ENCODE measurements at regions of chr6 and their contacts with region 1.

Region 1: GRCh38 chr6:151702851-151703611 is 104.5 kb upstream of the ESR1 start:
- DNase-seq: no peak
- ATAC-seq: peak; percentile 49
- H3K4me3 Mint-ChIP-seq: peak overlapping the region; percentile 60
- H3K27ac Mint-ChIP-seq: peak overlapping the region; percentile 82
- H3K4me1 Mint-ChIP-seq: peaks cover 46% of the 10 kb centered on the region
- H3K27me3 Mint-ChIP-seq: no peaks in the 10 kb centered on the region
- CTCF ChIP-seq: no peak

Region 2: GRCh38 chr6:151723152-151723551 is 20.1 kb after region 1 on chr6:
- CTCF ChIA-PET with region 1: no interaction called
- POLR2A ChIA-PET with region 1: interaction called, 13 read pairs
- intact Hi-C with region 1: loop called (anchors 1 kb)
- DNase-seq: no peak
- ATAC-seq: peak; percentile 90
- H3K4me3 Mint-ChIP-seq: peak overlapping the region; percentile 41
- H3K27ac Mint-ChIP-seq: peak overlapping the region; percentile 75
- H3K4me1 Mint-ChIP-seq: peaks cover 32% of the 10 kb centered on the region
- H3K27me3 Mint-ChIP-seq: no peaks in the 10 kb centered on the region
- CTCF ChIP-seq: no peak

Region 3: DNA sequence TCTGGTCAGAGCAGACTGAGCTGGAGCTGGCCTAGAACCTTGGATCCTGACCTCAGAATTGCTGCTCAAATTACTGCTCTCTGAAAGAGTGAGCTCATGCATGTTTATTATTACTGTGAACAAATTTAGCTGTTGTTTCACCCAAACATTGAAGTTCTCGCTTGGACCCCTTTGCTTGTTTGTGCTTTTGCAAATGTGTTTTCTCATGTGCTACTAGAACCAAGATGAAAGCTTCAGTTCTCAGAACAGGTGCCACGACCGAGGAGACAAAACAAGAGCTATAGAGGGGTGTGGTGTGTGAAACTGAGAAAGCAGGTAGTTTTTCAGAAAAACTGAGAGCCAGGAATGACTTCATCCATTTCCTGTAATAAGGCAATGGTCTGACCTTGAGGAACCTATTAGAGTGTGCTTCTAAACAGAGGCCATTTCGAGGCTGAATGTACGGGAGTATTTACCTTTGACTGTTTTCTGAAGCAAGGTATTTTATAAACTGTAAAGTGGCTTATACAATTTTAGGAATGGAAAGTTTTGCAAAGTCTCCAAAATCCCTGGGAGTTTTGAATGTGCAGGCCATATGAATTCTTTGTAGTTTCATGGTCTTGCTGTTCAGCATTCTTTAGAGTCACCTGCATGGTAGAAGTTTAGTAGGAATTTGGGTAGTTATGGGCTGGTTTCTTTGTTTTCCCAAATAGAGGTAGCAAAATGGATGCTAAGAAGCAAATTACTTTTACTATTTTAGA is 54.6 kb after region 1 on chr6:
- CTCF ChIA-PET with region 1: no interaction called
- POLR2A ChIA-PET with region 1: interaction called, 18 read pairs
- intact Hi-C with region 1: loop called (anchors 1 kb)
- DNase-seq: no peak
- ATAC-seq: peak; percentile 70
- H3K4me3 Mint-ChIP-seq: peak overlapping the region; percentile 33
- H3K27ac Mint-ChIP-seq: peak overlapping the region; percentile 89
- H3K4me1 Mint-ChIP-seq: peaks cover 32% of the 10 kb centered on the region
- H3K27me3 Mint-ChIP-seq: no peaks in the 10 kb centered on the region
- CTCF ChIP-seq: no peak

Region 4: DNA sequence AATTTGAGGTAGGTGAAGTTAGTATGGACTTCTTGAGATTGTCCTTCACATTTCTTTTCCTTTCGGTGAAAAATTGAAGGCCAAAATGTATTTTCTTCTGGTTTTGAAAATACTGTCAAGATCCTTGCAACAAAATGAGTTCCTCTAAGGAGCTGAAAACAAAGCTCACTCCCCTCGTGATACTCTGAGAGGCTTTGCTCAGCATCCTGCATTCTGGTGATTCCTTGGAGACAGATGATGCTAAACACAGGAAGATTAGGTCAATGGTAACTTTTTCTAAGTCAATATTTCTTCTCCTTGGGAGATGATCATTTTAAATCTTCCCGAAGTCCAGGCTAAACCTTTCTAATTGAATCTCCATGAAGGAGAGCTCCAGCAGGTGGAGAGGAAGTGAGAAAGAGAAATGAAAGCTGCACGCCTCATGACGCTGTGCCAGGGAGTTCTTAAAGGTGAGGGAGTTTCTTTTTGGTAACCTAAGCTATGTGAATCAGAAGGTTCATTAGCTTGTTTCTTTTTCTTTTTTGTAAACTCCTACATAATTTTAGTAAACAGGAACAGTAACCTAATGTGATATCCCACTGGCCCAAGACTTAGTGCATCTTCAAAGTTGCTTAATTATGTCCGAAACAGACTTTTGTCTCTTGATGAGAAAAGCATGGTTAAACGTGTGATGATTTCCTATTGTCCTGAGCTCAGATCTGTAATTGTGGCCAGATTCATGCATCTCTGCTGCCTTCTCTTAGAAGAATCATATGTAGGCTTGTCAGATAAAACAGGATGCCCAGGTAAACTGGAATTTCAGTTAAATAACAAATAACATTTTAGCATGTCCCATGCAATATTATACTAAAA is 119.5 kb after region 1 on chr6:
- CTCF ChIA-PET with region 1: no interaction called
- POLR2A ChIA-PET with region 1: no interaction called
- intact Hi-C with region 1: loop called (anchors 5 kb)
- DNase-seq: no peak
- ATAC-seq: peak; percentile 95
- H3K4me3 Mint-ChIP-seq: peak overlapping the region; percentile 59
- H3K27ac Mint-ChIP-seq: peak overlapping the region; percentile 8
- H3K4me1 Mint-ChIP-seq: peaks cover 20% of the 10 kb centered on the region
- H3K27me3 Mint-ChIP-seq: no peaks in the 10 kb centered on the region
- CTCF ChIP-seq: no peak

Region 5: DNA sequence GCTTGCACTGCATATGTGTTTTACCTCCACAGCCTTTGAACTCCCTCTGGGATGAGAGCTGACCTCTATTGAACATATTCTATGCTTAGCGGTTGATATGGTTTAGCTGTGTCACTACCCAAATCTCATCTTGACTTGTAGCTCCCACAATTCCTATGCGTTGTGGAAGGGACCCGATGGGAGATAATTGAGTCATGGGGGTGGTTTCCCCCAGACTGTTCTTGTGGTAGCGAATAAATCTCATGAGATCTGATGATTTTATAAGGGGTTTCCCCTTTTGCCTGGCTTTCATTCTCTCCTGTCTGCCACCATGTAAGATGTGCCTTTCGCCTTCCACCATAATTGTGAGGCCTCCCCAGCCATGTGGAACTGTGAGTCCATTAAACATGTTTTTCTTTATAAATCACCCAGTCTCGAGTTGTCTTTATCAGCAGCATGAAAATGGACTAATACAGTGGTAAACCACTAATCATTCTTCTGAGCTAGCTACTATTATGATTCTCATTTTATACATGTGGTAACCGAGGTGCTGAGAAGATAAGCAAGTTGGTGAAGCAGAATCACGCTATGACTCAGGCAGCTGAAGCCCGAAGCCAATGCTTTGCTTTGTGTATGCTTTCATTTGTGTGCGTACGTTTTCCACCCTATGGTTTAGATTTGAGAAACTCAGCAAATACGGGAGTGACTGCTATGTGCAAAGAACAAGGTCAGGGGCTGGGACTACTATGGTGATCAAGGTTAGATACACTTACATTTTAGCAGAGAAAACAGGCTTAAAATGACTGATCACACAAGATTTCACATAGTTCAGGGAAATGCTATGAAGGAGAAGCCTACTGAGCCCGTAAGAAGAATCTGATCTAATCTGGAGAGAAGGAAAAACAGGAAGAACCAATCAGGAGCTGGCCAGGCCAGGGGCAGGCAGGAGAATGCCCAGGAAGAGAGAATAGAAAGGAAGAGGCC is 468.0 kb after region 1 on chr6:
- CTCF ChIA-PET with region 1: no interaction called
- POLR2A ChIA-PET with region 1: no interaction called
- intact Hi-C with region 1: loop called (anchors 5 kb)
- DNase-seq: no peak
- ATAC-seq: peak; percentile 81
- H3K4me3 Mint-ChIP-seq: peak overlapping the region; percentile 61
- H3K27ac Mint-ChIP-seq: peak overlapping the region; percentile 93
- H3K4me1 Mint-ChIP-seq: peaks cover 38% of the 10 kb centered on the region
- H3K27me3 Mint-ChIP-seq: no peaks in the 10 kb centered on the region
- CTCF ChIP-seq: no peak